H1 (cell line): ENCODE measurements at regions of chr22 and their contacts with region 1.

Region 1: DNA sequence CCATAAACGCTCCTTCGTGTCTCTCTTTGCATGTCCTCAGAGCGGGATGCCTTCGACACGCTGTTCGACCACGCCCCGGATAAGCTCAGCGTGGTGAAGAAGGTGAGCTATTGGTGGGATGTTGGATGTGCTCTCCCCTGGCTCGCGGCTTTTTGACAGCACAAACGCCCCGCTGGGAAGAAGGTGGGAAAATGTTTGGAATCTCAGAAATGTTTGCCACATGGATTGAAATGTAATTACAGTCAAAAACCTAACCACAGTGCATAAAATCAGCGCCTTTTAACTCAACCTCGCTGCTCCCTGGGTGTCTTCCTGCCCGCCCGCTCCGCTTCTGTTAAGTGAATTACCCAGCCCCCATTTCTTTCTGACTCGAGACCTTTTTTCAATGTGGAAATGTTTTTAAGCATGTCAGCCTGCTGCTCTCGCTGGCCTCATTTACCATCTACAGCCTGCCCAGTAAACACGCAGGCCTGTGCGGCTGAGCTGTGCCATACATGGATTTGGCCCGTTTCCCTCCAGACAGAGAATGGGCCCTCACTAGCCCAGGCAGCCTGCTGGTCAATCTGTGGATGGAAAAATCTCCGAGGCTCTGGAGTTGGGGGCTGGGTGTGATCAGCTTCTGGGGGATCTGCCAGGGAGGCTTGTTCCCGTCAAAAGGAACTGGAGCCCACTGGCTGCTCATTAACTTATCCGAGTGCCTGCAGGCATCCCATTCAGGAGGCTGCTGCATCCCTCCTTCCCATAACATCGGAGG is 32.7 kb upstream of the PARVG start:
- DNase-seq: peak; percentile 84 to 86
- H3K4me3 ChIP-seq: peak overlapping the region in 2 of 4 experiments; percentile 21 to 47; a peak in 4 of 8 replicates
- H3K27ac ChIP-seq: peak overlapping the region; percentile 84; the same call in 1 of the 2 replicates
- H3K4me1 ChIP-seq: peaks cover 19 to 48% (median 41%) of the 10 kb centered on the region in 4 experiments
- H3K27me3 ChIP-seq: no peaks in the 10 kb centered on the region
- CTCF ChIP-seq: no peak
- EP300 ChIP-seq: peak in 1 of 2 experiments; percentile 81; a peak in 1 of 3 replicates
- POLR2A ChIP-seq: peak in 1 of 2 experiments; percentile 36; a peak in 1 of 3 replicates
- RAD21 ChIP-seq: 0 out of 4 replicates have a peak, but pooled peaks of 1 of the 2 experiments have one; percentile 1

Region 2: GRCh38 chr22:44158816-44159215 is 10.8 kb after region 1 on chr22:
- CTCF ChIA-PET with region 1: interaction called, 3 read pairs
- POLR2A ChIA-PET with region 1: interaction called, 21 read pairs
- DNase-seq: no peak
- H3K4me3 ChIP-seq: no peak overlapping the region
- H3K27ac ChIP-seq: no peak overlapping the region
- H3K4me1 ChIP-seq: peaks cover 4 to 21% (median 12%) of the 10 kb centered on the region in 4 experiments; a peak in 6 of 7 replicates
- H3K27me3 ChIP-seq: no peaks in the 10 kb centered on the region
- CTCF ChIP-seq: no peak
- EP300 ChIP-seq: no peak
- POLR2A ChIP-seq: no peak
- RAD21 ChIP-seq: no peak

Region 3: DNA sequence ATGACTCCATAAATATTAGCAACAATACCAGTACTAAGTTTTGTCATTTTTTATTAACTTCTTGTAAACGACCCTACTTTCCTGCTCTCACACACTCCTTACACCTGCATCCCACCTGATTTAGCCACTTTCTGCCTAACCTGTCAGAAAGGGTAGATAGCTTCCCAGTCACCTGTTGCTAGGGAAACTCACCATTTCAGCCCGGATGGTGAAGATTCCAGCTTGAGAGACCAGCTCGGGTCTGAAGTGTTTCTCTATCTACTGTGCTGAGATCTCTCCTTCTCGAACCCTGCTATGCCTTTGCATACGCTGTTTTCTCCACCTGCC is 32.7 kb after region 1 on chr22 and contains the start of gene PARVG:
- CTCF ChIA-PET with region 1: interaction called, 5 read pairs
- POLR2A ChIA-PET with region 1: interaction called, 22 read pairs
- DNase-seq: no peak
- H3K4me3 ChIP-seq: no peak within 1 kb of the TSS
- H3K27ac ChIP-seq: no peak within 1 kb of the TSS
- H3K4me1 ChIP-seq: peaks cover 0 to 12% (median 9%) of the 10 kb centered on the region in 4 experiments; a peak in 5 of 7 replicates
- H3K27me3 ChIP-seq: no peaks in the 10 kb centered on the region
- CTCF ChIP-seq: no peak
- EP300 ChIP-seq: no peak
- POLR2A ChIP-seq: no peak
- RAD21 ChIP-seq: no peak
- total RNA-seq, gene PARVG: 0.37 and 0.50 TPM in 2 replicates